Activated T-helper 1 cell treated with anti-CD3 and anti-CD28 coated beads, Interleukin-12 subunit alpha, Interleukin-12 subunit beta, Interleukin-2, Interleukin-4 antibody, amounts not matched to agents 30 ng/mL and 10 ng/mL and 1 ng/mL, durations not matched to agents 14 hours and 24 hours and 36 hours (primary cell): ENCODE measurements at regions of chr1 and their contacts with region 1.

Region 1: GRCh38 chr1:15835741-15836510 is 11.6 kb upstream of the SPEN start:
- DNase-seq: peak; percentile 99
- H3K4me3 Mint-ChIP-seq: peak overlapping the region; percentile 95
- H3K27ac Mint-ChIP-seq: peak overlapping the region; percentile 99
- H3K4me1 Mint-ChIP-seq: peaks cover 22% of the 10 kb centered on the region
- H3K27me3 Mint-ChIP-seq: peaks cover 3% of the 10 kb centered on the region

Region 2: GRCh38 chr1:15918962-15919715 is 83.2 kb after region 1 on chr1:
- intact Hi-C with region 1: loop called (anchors 1 kb)
- DNase-seq: peak; percentile 60
- H3K4me3 Mint-ChIP-seq: peak overlapping the region; percentile 44
- H3K27ac Mint-ChIP-seq: peak overlapping the region; percentile 42
- H3K4me1 Mint-ChIP-seq: peaks cover 42% of the 10 kb centered on the region
- H3K27me3 Mint-ChIP-seq: no peaks in the 10 kb centered on the region

Region 3: GRCh38 chr1:15966081-15966955 is 130.4 kb after region 1 on chr1:
- intact Hi-C with region 1: loop called (anchors 1 kb)
- DNase-seq: peak; percentile 72
- H3K4me3 Mint-ChIP-seq: peak overlapping the region; percentile 79
- H3K27ac Mint-ChIP-seq: peak overlapping the region; percentile 95
- H3K4me1 Mint-ChIP-seq: peaks cover 77% of the 10 kb centered on the region
- H3K27me3 Mint-ChIP-seq: no peaks in the 10 kb centered on the region

Region 4: GRCh38 chr1:16206547-16207317 is 370.8 kb after region 1 on chr1:
- intact Hi-C with region 1: loop called (anchors 1 kb)
- DNase-seq: peak; percentile 92
- H3K4me3 Mint-ChIP-seq: peak overlapping the region; percentile 83
- H3K27ac Mint-ChIP-seq: peak overlapping the region; percentile 97
- H3K4me1 Mint-ChIP-seq: no peaks in the 10 kb centered on the region
- H3K27me3 Mint-ChIP-seq: no peaks in the 10 kb centered on the region

Region 5: DNA sequence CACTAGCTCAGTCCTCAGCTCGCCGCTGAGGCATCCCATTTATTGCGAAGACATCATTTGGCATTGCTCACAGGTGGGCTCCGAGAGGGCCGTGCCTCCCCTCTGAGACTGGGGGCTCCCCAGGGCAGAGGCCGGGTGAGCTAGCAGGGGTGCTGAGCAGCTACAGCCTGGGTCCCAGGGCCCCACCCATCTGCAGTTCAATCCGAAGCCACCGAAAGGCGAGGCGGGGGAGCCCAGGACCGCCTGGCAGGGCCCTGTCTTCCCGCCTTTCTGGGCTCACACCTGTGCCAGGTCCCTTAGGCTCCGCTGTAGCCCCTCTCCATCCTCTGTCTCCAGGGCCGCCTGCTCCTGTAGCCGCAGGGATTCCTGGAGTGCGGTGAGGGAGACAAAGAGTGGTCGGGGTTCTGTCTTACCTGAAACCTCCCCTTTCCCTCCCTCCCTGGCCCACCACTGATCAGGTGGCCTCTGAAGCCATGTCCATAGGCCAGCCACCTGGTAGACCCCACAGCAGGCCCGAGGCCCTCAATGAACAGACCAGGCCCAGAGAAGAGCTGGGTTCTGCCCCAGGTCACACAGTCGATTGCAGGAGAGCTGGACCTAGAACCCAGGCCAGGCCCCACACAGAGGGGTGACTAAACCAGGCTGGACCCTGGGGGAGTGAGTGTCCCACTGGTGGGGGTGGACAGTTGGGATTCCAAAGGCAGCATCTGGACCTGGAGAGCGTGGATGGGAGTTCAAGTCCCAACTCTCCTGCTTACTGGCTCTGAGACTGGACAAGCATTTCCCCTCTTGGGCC is 795.5 kb after region 1 on chr1:
- intact Hi-C with region 1: no loop called
- DNase-seq: no peak
- H3K4me3 Mint-ChIP-seq: no peak overlapping the region
- H3K27ac Mint-ChIP-seq: no peak overlapping the region
- H3K4me1 Mint-ChIP-seq: no peaks in the 10 kb centered on the region
- H3K27me3 Mint-ChIP-seq: no peaks in the 10 kb centered on the region

Region 6: GRCh38 chr1:16904560-16905111 is 1068.7 kb after region 1 on chr1:
- intact Hi-C with region 1: loop called (anchors 10 kb)
- DNase-seq: peak; percentile 99
- H3K4me3 Mint-ChIP-seq: no peak overlapping the region
- H3K27ac Mint-ChIP-seq: no peak overlapping the region
- H3K4me1 Mint-ChIP-seq: peaks cover 19% of the 10 kb centered on the region
- H3K27me3 Mint-ChIP-seq: no peaks in the 10 kb centered on the region